Activated T-helper 2 cell treated with anti-CD3 and anti-CD28 coated beads, Interferon-gamma antibody, Interleukin-2, Interleukin-4, amounts not matched to agents 10 μg/mL and 5 μg/mL and 100 μg/mL, durations not matched to agents 14 hours and 24 hours and 36 hours (primary cell): ENCODE measurements at regions of chr3 and their contacts with region 1.

Region 1: DNA sequence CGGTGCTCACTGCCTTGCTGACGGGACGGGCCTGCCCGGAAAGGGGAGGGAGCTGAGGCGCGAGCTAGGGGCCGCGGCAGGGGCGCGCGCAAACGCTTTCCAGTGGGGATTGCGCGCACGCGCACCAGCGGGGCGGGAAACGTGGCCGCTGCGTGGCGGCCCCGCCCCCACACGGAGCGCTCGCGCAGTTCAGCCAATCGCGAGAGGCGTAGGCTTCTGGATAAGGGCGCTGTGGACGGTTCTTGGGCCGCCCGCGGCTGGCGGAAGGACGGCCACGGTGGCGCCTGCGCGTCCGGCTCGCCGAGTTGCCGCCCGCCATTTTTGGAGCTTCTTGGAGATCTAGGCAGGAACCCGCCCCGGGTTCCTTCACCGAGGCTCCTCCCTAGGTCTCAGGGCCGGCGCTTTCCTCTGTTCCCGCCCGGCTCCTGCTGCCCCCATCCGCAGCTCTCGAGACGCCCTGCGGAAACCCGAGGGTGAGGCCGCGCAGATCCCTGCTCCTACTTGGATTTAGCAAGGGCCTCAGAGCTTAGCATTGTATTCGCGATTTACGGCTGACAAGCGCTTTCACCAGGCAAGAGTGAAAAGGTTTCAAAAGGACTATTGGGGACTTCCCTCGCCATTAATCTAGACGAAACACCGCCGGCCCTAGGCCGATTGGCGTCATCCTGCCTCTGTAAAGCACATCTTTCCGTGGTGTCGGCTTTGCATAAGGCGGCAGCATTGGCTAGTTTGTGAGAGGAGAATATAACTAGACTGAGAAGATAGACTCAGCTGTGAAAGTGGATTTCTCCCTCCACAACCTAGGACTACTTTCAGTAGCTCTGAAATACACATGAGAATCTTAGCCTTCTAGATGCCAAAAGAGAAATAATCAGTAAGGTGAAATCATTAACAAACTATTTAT is 496 bp upstream of the STAG1 start:
- DNase-seq: peak; percentile 99
- H3K4me3 Mint-ChIP-seq: peak overlapping the region; percentile 88
- H3K27ac Mint-ChIP-seq: peak overlapping the region; percentile 98
- H3K4me1 Mint-ChIP-seq: peaks cover 34% of the 10 kb centered on the region
- H3K27me3 Mint-ChIP-seq: no peaks in the 10 kb centered on the region

Region 2: GRCh38 chr3:136075218-136075808 is 677.4 kb before region 1 on chr3:
- intact Hi-C with region 1: loop called (anchors 1 kb)
- DNase-seq: peak; percentile 53
- H3K4me3 Mint-ChIP-seq: no peak overlapping the region
- H3K27ac Mint-ChIP-seq: no peak overlapping the region
- H3K4me1 Mint-ChIP-seq: peaks cover 5% of the 10 kb centered on the region
- H3K27me3 Mint-ChIP-seq: peaks cover 7% of the 10 kb centered on the region

Region 3: GRCh38 chr3:136305878-136306277 is 446.8 kb before region 1 on chr3:
- intact Hi-C with region 1: loop called (anchors 2 kb)
- DNase-seq: no peak
- H3K4me3 Mint-ChIP-seq: no peak overlapping the region
- H3K27ac Mint-ChIP-seq: no peak overlapping the region
- H3K4me1 Mint-ChIP-seq: peaks cover 3% of the 10 kb centered on the region
- H3K27me3 Mint-ChIP-seq: no peaks in the 10 kb centered on the region

Region 4: GRCh38 chr3:136545664-136546268 is 206.9 kb before region 1 on chr3:
- intact Hi-C with region 1: loop called (anchors 5 kb)
- DNase-seq: no peak
- H3K4me3 Mint-ChIP-seq: no peak overlapping the region
- H3K27ac Mint-ChIP-seq: no peak overlapping the region
- H3K4me1 Mint-ChIP-seq: peaks cover 8% of the 10 kb centered on the region
- H3K27me3 Mint-ChIP-seq: no peaks in the 10 kb centered on the region

Region 5: DNA sequence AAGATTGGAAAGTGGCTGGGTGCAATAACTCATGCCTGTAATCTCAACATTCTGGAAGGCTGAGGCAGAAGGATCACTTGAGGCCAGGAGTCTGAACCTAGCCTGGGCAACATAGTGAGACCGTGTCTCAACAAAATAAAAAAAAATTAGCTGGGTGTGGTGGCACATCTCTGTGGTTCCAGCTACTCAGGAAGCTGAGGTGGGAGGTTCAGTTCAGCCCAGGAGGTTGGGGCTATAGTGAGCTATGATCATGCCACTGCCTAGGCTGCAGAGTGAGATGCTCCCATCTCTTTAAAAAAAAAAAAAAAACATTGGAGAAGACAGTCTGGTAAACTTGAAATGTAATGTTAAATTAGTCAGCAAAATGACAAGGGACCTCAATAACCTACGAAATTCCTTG is 58.4 kb before region 1 on chr3:
- intact Hi-C with region 1: no loop called
- DNase-seq: no peak
- H3K4me3 Mint-ChIP-seq: no peak overlapping the region
- H3K27ac Mint-ChIP-seq: no peak overlapping the region
- H3K4me1 Mint-ChIP-seq: peaks cover 23% of the 10 kb centered on the region
- H3K27me3 Mint-ChIP-seq: no peaks in the 10 kb centered on the region

Region 6: DNA sequence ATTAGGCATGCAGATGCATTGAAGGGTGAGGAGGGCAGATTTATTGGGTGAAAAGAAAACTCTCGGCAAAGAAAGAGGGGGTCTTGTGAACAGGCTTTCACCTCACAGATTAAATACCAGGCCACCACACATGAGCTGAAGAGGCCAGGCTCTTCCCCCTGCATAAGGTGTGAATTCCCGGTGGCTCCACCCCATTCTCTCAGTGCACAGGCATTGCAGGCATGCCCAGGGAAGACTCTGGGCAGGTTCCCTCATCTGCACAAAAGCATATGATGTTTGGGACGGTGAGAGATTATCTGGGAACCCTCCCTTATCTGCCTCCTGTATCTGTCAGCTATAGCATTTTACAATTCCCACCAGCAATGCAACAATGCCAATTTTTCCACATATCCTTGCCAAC is 59.0 kb after region 1 on chr3:
- intact Hi-C with region 1: no loop called
- DNase-seq: no peak
- H3K4me3 Mint-ChIP-seq: no peak overlapping the region
- H3K27ac Mint-ChIP-seq: no peak overlapping the region
- H3K4me1 Mint-ChIP-seq: no peaks in the 10 kb centered on the region
- H3K27me3 Mint-ChIP-seq: peaks cover 6% of the 10 kb centered on the region

Region 7: GRCh38 chr3:136861890-136862616 is 109.4 kb after region 1 on chr3 and contains the start of gene NCK1:
- intact Hi-C with region 1: loop called (anchors 1 kb)
- DNase-seq: peak; percentile 98
- H3K4me3 Mint-ChIP-seq: peak within 1 kb of the TSS; percentile 95
- H3K27ac Mint-ChIP-seq: peak within 1 kb of the TSS; percentile 98
- H3K4me1 Mint-ChIP-seq: peaks cover 41% of the 10 kb centered on the region
- H3K27me3 Mint-ChIP-seq: no peaks in the 10 kb centered on the region
- total RNA-seq, gene NCK1: 40.2 and 41.9 TPM in 2 replicates

Region 8: GRCh38 chr3:137013955-137014688 is 261.4 kb after region 1 on chr3:
- intact Hi-C with region 1: loop called (anchors 1 kb)
- DNase-seq: peak; percentile 74
- H3K4me3 Mint-ChIP-seq: peak overlapping the region; percentile 77
- H3K27ac Mint-ChIP-seq: no peak overlapping the region
- H3K4me1 Mint-ChIP-seq: peaks cover 5% of the 10 kb centered on the region
- H3K27me3 Mint-ChIP-seq: peaks cover 3% of the 10 kb centered on the region